ENCODE measurements at regions of chr17 and their contacts with region 1.

Region 1: DNA sequence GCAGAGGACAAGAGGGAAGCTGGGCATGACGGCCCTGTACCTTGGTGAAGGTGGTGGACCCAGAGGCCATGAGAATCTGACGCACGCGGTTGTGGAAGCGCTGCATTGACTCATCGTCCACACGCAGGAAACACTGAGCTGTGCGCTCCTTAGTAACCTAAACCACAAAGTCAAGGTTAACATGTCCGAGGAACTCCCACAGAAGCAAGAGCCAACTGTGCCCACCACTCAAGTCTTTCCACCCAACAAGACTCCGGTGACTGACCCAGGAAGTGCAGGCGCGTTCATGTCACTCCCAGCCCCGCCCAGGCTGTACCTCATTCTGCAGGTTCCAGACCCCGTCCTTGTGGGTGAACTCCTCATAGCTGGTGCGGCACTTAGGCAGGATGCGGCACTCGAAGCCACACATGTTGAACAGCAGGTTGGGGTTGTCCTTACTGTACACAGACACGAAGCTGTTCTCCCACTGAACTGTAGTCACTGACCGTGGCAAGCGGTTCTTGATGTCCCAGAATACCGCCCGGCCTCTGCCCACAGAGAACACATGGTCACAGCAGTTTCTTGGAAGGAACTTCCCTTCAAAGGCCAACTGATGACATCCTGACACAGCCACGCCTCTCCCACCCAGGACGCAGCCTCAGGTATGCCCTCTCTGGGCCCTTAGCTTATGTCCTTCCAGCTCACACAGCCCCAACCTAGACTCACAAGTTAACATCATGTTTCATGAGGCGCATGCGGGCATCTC is 11.5 kb downstream of the PRPF8 start:
- DNase-seq: no peak
- H3K4me3 ChIP-seq: no peak overlapping the region
- CTCF ChIP-seq: no peak

Region 2: DNA sequence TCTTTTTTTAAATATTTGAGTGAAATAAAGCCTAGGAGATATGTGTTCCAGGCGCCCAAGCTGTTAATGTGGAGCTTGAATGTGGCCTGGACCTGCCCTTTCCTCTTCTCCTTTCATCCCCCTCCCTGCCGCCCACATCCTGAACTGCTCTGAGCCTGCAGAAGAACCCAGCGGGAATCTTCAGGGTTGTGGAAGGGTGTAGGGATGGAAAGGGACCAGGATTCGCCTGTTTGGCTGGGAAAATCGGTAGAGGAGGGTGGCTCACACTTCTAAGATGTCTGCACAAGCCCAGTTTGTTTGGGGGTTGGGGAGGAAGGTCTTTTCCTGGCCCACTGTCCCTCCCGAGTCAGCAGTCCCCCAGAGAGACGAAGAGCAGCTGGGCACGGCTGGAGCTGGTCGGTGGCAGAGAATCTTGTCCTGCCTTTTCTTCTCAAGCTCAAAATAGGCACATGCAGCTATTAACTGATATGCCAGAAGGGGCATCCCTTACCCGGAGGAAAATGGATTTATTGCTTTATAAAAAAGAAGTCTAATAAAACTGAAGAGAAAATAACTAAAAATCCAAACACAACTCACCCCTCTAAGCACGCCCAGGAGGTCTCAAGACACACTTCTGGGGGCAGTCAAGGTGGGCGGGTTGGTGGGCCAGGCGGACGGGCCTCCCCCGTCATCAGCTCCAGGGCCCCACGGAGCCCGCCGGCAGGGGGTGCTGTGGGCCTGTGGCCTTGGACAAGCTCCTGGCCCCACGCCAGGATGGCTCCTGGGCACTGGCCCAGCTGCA is 99.1 kb before region 1 on chr17:
- CTCF ChIA-PET with region 1: interaction called, 10 read pairs
- POLR2A ChIA-PET with region 1: no interaction called
- DNase-seq: no peak
- H3K4me3 ChIP-seq: no peak overlapping the region
- CTCF ChIP-seq: peak; percentile 91

Region 3: GRCh38 chr17:1658100-1658499 is 15.1 kb before region 1 on chr17:
- CTCF ChIA-PET with region 1: interaction called, 92 read pairs
- POLR2A ChIA-PET with region 1: no interaction called
- DNase-seq: no peak
- H3K4me3 ChIP-seq: no peak overlapping the region
- CTCF ChIP-seq: no peak

Region 4: DNA sequence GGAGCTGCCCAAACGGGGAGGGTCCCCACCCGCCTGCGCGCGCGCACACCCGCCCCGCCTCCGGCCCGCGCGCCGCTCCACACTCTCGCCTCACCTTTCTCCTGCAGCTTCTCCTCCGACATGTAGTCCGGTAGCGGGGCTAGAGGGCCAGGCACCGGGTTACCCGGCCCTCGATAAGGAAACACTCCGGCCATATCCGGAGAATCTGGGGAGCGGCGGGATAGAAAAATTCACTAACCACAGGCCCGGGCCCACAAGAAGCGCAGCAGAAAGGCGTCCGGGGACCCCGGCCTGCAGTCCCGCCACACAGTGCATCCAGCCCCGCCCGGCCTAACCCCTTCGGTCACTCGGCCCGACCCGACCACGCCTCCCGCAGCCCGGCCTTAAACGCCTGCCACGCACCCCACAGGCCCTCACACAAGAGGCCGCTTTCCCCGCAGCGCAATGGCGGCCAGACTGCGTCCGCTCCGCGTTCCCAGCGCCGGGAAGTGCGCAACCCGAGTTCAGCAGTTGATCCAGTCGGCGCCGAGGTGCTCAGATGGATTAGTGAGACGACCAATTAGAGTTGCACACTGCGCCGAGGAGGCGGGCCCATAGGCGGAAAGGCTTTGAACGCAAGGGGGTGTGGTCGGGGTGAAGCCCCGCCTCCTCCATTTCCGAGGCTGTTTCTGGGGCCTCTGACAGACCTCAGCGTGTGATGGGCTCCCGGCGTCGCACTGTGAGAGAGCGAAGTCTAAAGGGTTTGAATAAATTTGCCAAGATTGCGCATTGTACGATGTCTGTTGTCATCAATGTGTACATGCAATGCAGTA is 11.4 kb after region 1 on chr17 and contains the start of gene PRPF8:
- CTCF ChIA-PET with region 1: interaction called, 52 read pairs
- POLR2A ChIA-PET with region 1: interaction called, 5 read pairs
- DNase-seq: peak; percentile 73
- H3K4me3 ChIP-seq: peak within 1 kb of the TSS; percentile 86
- CTCF ChIP-seq: no peak

Region 5: GRCh38 chr17:1783834-1784611 is 110.8 kb after region 1 on chr17:
- CTCF ChIA-PET with region 1: interaction called, 40 read pairs
- POLR2A ChIA-PET with region 1: no interaction called
- DNase-seq: no peak
- H3K4me3 ChIP-seq: no peak overlapping the region
- CTCF ChIP-seq: peak; percentile 67